ENCODE measurements at regions of chrX and their contacts with region 1.

Region 1: DNA sequence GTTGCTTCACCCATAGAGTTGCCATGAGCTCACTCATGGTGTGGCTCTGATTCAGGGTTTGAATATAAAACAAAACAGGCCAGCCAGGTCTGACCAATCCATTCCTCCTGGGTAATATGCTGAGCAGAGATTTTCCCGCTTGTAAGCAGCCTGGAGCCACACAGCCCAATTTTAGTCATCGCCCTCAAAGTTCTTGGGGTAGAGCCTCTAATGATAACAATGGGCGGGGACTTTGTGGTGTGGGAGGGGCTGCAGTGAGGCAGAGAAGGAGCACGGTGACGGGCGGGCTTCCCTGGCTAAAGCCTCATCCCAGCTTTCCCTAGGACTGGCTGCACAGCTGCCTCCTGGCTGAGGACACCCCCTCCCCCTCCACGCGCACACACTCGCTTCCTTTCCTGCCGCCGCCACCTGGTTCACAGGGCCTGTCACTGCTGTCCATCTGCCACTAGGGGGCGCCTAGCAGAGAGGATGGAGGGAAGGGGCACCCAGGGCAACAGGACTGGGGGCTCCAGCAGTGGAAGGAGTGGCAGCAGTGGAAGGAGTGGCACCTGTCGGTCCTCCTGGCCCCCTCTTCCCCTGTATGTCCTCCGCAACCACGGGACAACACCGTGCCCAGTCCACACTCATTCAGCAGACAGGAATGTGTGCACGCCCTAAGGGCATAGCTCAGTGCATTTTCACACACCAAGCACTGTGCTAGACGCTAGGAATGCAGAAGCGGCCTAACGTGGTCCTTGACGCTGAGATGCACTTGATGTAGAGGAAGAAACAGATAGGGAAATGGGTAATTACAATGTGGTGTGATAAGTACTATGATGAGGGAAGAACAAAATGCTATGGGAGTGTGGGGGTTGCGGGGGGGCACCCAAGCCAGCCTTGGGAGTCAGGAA is 26.8 kb downstream of the PRPS1 start:
- DNase-seq: peak; percentile 71
- ATAC-seq: peak; percentile 72

Region 2: GRCh38 chrX:107894038-107894437 is 238.9 kb after region 1 on chrX:
- intact Hi-C with region 1: loop called (anchors 5 kb)
- DNase-seq: no peak
- ATAC-seq: no peak